CD8-positive, alpha-beta T cell (primary cell): ENCODE measurements at regions of chrX and their contacts with region 1.

Region 1: GRCh38 chrX:136626237-136626636 is 21.7 kb upstream of the CD40LG start:
- DNase-seq: no peak
- ATAC-seq: no peak
- H3K4me3 ChIP-seq: no peak overlapping the region
- H3K4me3 Mint-ChIP-seq: peak overlapping the region; percentile 11
- H3K27ac ChIP-seq: peak overlapping the region in 1 of 2 experiments; percentile 9
- H3K27ac Mint-ChIP-seq: no peak overlapping the region
- H3K4me1 ChIP-seq: peaks cover 83% of the 10 kb centered on the region
- H3K4me1 Mint-ChIP-seq: peaks cover 83% of the 10 kb centered on the region
- H3K27me3 ChIP-seq: no peaks in the 10 kb centered on the region
- H3K27me3 Mint-ChIP-seq: no peaks in the 10 kb centered on the region
- CTCF ChIP-seq: no peak

Region 2: GRCh38 chrX:136608295-136609171 is 17.7 kb before region 1 on chrX:
- CTCF ChIA-PET with region 1: interaction called, 10 read pairs
- POLR2A ChIA-PET with region 1: no interaction called
- intact Hi-C with region 1: no loop called
- DNase-seq: peak; percentile 16 to 75 (median 52)
- ATAC-seq: peak; percentile 72
- H3K4me3 ChIP-seq: no peak overlapping the region
- H3K4me3 Mint-ChIP-seq: no peak overlapping the region
- H3K27ac ChIP-seq: no peak overlapping the region
- H3K27ac Mint-ChIP-seq: peak overlapping the region; percentile 4
- H3K4me1 ChIP-seq: peaks cover 14% of the 10 kb centered on the region
- H3K4me1 Mint-ChIP-seq: peaks cover 37% of the 10 kb centered on the region
- H3K27me3 ChIP-seq: no peaks in the 10 kb centered on the region
- H3K27me3 Mint-ChIP-seq: no peaks in the 10 kb centered on the region
- CTCF ChIP-seq: peak; percentile 44

Region 3: DNA sequence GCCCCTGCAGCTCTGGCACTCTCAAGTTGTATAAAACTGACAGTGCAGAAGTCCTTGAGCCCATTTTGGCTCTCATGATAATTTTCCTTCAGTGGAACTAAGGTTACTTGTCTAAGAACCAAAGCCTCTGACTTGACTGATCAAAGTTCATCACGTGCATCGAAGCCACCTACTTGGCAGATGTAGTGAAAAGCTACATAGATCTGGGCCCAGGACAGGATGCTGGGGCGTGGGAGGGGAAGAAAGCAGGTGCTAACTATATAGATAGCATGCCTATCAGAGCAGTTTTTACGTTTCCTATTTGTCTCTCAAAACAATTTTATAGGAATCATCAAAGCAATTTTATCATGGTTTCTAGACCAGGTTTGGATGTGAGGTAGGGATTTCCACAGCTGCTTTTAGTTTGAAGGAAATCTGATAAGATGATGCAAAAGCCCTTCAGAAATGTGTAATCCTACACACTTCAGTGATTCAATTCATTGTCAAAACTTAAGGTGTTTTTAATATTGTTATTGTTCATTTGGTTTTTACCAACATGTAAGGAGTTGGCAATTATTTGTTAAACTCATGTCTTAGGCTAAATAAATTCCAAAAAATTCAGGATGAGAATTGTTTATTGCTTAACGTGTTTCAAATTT is 20.5 kb after region 1 on chrX:
- CTCF ChIA-PET with region 1: no interaction called
- POLR2A ChIA-PET with region 1: no interaction called
- intact Hi-C with region 1: loop called in 1 of 2 experiments (anchors 2 kb)
- DNase-seq: peak in 5 of 9 experiments; percentile 8 to 49 (median 30)
- ATAC-seq: peak; percentile 78
- H3K4me3 ChIP-seq: no peak overlapping the region
- H3K4me3 Mint-ChIP-seq: no peak overlapping the region
- H3K27ac ChIP-seq: peak overlapping the region in 1 of 2 experiments; percentile 22
- H3K27ac Mint-ChIP-seq: peak overlapping the region; percentile 41
- H3K4me1 ChIP-seq: peaks cover 25% of the 10 kb centered on the region
- H3K4me1 Mint-ChIP-seq: peaks cover 51% of the 10 kb centered on the region
- H3K27me3 ChIP-seq: no peaks in the 10 kb centered on the region
- H3K27me3 Mint-ChIP-seq: no peaks in the 10 kb centered on the region
- CTCF ChIP-seq: no peak